SK-N-SH (cell line): ENCODE measurements at regions of chr1 and their contacts with region 1.

Region 1: GRCh38 chr1:8560611-8561544 is 243.0 kb downstream of the SLC45A1 start:
- DNase-seq: peak; percentile 38
- H3K4me3 ChIP-seq: no peak overlapping the region; a peak in 1 of 4 replicates
- H3K27ac ChIP-seq: peak overlapping the region in 1 of 2 experiments; percentile 16; a peak in 1 of 4 replicates
- H3K4me1 ChIP-seq: peaks cover 11 to 38% of the 10 kb centered on the region in 2 experiments
- H3K27me3 ChIP-seq: no peaks in the 10 kb centered on the region
- CTCF ChIP-seq: peak; percentile 90
- EP300 ChIP-seq: no peak
- RAD21 ChIP-seq: peak; percentile 92

Region 2: DNA sequence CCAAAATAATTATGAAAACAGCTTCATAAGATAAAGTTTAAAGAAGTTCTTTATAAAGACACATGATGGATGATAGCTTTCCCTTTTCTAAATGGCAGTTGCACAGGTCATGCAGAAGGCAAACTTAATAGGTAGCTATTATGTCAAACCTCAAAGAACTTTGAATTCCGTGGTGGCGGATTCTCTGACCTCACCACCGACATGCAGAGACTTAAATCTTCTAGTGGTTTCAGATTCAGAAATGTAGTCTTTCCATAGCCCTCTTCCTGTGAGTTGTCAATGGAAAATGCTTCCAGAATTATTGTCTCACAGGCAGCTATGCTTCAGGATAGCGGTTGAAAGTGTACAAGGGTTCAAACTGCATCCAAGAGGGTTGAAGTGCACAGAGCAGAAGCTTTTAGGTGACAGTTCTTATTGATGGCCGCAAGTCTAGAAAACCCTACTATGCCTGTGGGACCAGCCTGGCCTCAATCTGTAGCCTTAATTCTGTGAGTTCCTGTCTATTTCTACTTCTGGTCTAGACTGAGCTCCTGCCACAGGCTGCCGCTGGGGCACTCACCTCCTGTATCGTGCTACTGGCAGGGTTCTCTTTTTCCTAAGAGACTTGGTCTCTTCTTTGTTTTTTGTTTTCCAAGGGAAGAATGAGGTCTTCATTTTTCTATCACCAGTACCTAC is 417.8 kb before region 1 on chr1:
- CTCF ChIA-PET with region 1: no interaction called
- POLR2A ChIA-PET with region 1: no interaction called
- DNase-seq: no peak
- H3K4me3 ChIP-seq: no peak overlapping the region
- H3K27ac ChIP-seq: no peak overlapping the region
- H3K4me1 ChIP-seq: no peaks in the 10 kb centered on the region
- H3K27me3 ChIP-seq: no peaks in the 10 kb centered on the region
- CTCF ChIP-seq: no peak
- EP300 ChIP-seq: no peak; a peak in 1 of 4 replicates
- RAD21 ChIP-seq: no peak

Region 3: GRCh38 chr1:8348777-8349491 is 211.9 kb before region 1 on chr1:
- CTCF ChIA-PET with region 1: no interaction called
- POLR2A ChIA-PET with region 1: no interaction called
- DNase-seq: peak; percentile 91
- H3K4me3 ChIP-seq: no peak overlapping the region; a peak in 1 of 4 replicates
- H3K27ac ChIP-seq: no peak overlapping the region
- H3K4me1 ChIP-seq: peaks cover under 1 to 13% of the 10 kb centered on the region in 2 experiments; a peak in 2 of 4 replicates
- H3K27me3 ChIP-seq: no peaks in the 10 kb centered on the region
- CTCF ChIP-seq: peak; percentile 72
- EP300 ChIP-seq: no peak
- RAD21 ChIP-seq: peak; percentile 78

Region 4: GRCh38 chr1:8571200-8571984 is 10.5 kb after region 1 on chr1:
- CTCF ChIA-PET with region 1: interaction called, 27 read pairs
- POLR2A ChIA-PET with region 1: no interaction called
- DNase-seq: peak; percentile 43
- H3K4me3 ChIP-seq: no peak overlapping the region; a peak in 1 of 4 replicates
- H3K27ac ChIP-seq: peak overlapping the region; percentile 34 to 90; a peak in 3 of 4 replicates
- H3K4me1 ChIP-seq: peaks cover 18 to 21% of the 10 kb centered on the region in 2 experiments; a peak in 3 of 4 replicates
- H3K27me3 ChIP-seq: no peaks in the 10 kb centered on the region
- CTCF ChIP-seq: peak; percentile 68
- EP300 ChIP-seq: peak in 1 of 2 experiments; percentile 6; a peak in 1 of 4 replicates
- RAD21 ChIP-seq: peak; percentile 51

Region 5: GRCh38 chr1:8598060-8598724 is 37.3 kb after region 1 on chr1:
- CTCF ChIA-PET with region 1: interaction called, 18 read pairs
- POLR2A ChIA-PET with region 1: no interaction called
- DNase-seq: peak; percentile 63
- H3K4me3 ChIP-seq: peak overlapping the region; percentile 14 to 35; a peak in 2 of 4 replicates
- H3K27ac ChIP-seq: peak overlapping the region; percentile 78 to 82
- H3K4me1 ChIP-seq: peaks cover 34 to 46% of the 10 kb centered on the region in 2 experiments; a peak in 3 of 4 replicates
- H3K27me3 ChIP-seq: no peaks in the 10 kb centered on the region
- CTCF ChIP-seq: peak; percentile 45
- EP300 ChIP-seq: no peak
- RAD21 ChIP-seq: peak; percentile 66

Region 6: DNA sequence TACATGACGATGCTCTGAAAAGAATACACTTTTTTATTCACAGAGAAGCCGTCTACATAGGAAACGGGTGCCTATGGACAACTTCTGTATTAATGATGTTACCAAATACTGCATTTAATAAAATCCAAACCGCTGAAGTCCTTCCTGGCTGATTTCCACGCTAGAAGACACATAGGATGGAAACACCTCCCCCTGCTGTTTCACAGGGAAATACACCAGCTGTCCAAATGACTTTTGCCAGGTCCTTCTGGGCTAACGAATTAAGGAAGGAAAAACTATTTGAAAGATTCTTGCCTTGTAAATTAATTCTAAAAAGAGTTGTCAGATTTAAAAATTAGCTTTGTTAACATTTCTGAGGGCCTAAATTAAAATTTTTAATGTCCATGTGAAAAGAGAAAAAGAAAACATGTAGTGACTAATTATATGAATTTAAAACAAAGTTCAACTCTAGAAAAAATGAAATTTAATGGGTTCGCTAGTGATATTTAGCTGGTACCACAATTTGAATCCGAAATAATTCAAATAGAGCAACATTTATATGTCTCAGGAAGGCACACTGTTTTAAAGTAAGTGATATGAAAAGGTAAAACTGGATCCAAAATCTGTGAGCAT is 110.5 kb after region 1 on chr1:
- CTCF ChIA-PET with region 1: interaction called, 65 read pairs
- POLR2A ChIA-PET with region 1: no interaction called
- DNase-seq: peak; percentile 60
- H3K4me3 ChIP-seq: no peak overlapping the region
- H3K27ac ChIP-seq: no peak overlapping the region; a peak in 1 of 4 replicates
- H3K4me1 ChIP-seq: peaks cover 30 to 52% of the 10 kb centered on the region in 2 experiments
- H3K27me3 ChIP-seq: no peaks in the 10 kb centered on the region
- CTCF ChIP-seq: peak; percentile 81
- EP300 ChIP-seq: no peak
- RAD21 ChIP-seq: peak; percentile 84

Region 7: GRCh38 chr1:8702850-8703810 is 142.3 kb after region 1 on chr1:
- CTCF ChIA-PET with region 1: interaction called, 14 read pairs
- POLR2A ChIA-PET with region 1: no interaction called
- DNase-seq: peak; percentile 96
- H3K4me3 ChIP-seq: peak overlapping the region; percentile 51 to 64
- H3K27ac ChIP-seq: peak overlapping the region; percentile 73 to 93
- H3K4me1 ChIP-seq: peaks cover 30 to 48% of the 10 kb centered on the region in 2 experiments; a peak in 3 of 4 replicates
- H3K27me3 ChIP-seq: no peaks in the 10 kb centered on the region
- CTCF ChIP-seq: no peak
- EP300 ChIP-seq: peak; percentile 32 to 89; a peak in 3 of 4 replicates
- RAD21 ChIP-seq: no peak; the same call in 1 of the 2 replicates

Region 8: DNA sequence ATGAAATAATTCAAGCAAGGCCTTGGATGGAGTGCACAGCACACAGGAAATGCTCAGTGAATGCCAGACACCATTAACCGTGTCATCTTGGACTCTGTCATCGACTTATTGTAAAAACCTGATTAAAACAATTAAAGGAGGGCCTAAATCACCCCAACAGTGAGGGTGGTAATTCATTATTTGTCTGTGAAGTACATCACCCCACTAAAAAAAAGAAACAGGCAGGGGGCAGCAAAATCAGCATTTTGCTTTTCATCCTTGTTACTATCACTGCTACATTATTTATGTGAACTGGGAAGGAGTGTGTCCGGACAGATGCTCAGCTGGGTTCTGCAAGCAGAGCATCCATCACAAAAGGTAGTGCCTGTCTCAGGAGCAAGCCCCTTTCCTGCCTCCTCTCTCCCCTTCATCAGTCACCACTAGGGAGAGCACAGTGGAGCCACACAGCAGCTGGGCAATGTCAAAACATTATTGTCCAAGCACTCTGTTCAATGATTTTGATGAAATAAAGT is 158.0 kb after region 1 on chr1:
- CTCF ChIA-PET with region 1: interaction called, 18 read pairs
- POLR2A ChIA-PET with region 1: no interaction called
- DNase-seq: peak; percentile 45
- H3K4me3 ChIP-seq: no peak overlapping the region
- H3K27ac ChIP-seq: peak overlapping the region in 1 of 2 experiments; percentile 84; a peak in 2 of 4 replicates
- H3K4me1 ChIP-seq: peaks cover 8 to 15% of the 10 kb centered on the region in 2 experiments; a peak in 3 of 4 replicates
- H3K27me3 ChIP-seq: no peaks in the 10 kb centered on the region
- CTCF ChIP-seq: peak; percentile 43
- EP300 ChIP-seq: peak in 1 of 2 experiments; percentile 62; a peak in 2 of 4 replicates
- RAD21 ChIP-seq: peak; percentile 64